ENCODE measurements at regions of chr17 and their contacts with region 1.

Region 1: DNA sequence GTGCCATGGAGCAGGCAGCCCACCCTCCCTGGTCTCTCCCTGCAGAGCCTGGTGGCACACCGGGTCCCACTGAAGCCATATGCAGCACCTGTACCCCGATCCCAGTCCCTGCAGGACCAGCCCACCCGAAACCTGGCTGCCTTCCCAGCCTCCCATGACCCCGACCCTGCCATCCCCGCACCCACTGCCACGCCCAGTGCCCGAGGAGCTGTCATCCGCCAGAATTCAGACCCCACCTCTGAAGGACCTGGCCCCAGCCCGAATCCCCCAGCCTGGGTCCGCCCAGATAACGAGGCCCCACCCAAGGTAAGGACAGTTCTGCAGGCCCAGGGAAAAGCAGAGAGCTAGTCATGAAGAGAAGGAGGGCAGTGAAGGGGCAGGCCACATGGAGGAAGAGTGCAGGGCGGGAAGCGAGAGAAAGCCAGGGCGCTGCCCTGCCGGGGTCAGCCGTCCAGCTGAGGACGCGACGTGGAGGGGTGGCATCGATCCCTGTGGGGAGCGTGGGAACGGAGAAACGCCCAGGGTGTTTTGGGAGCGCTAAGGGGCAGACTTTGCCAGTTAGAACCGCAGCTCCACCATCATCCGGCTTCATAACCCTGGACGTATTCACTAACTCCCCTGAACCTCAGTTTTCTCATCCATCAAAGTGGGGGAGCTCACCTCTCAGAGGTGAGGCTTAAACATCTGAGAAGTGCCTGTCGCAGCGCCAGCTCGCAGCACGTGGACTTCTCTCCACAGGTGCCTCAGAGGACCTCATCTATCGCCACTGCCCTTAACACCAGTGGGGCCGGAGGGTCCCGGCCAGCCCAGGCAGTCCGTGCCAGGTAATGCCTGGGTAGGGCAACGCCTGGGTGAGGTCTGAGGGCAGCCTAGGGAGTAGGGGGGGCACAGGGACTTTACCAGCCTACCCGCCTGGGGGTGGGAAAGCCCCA is 7.7 kb upstream of the C17orf107 start:
- DNase-seq: no peak

Region 2: DNA sequence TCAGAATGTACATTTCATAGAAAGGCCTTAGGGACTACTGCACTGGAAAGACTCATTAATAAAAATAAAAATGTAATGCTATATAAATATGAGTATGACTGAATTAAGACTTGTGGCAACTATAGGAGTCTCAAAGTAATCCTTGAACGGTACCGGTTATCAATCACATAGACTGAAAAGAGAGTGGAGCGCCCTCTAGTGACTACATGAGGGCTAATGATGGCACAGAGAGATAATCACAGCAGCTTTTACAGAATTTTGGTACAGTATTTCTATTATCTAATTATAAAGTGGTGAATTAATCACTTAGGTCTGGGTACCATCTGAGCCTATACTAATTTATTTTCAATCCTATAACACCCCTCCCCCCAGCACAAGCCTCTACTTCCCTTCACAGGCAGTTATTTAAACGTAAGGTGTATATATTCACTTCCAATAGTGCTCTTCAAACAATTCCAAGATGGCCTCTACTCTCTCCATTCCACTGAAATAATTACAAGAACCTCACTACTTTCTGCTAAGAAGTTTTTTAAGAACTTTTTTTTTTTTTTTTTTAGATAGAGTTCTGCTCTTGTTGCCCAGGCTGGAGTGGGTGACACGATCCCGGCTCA is 587.2 kb before region 1 on chr17:
- intact Hi-C with region 1: no loop called
- DNase-seq: no peak

Region 3: DNA sequence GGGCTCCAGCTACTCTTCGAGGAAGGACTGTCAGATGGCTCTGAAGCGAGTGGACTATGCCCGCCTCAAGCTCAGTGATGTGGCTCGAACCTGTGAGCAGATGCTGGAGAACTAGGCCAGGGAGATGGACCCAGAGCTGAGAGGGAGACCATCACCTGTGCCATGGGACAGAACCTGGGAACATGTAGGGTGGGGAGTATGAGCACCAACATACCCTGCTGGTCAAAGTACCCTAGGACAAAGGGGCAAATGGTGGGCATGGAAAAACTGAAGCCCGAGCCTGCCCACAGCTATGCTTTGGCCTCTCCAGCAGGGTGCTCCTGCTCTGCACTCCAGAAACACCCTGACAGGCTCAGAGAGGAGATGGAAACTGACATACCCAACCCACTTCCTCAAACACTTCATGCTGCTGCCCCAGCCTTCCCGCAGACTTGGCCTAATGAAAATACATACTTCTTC is 158.6 kb before region 1 on chr17:
- intact Hi-C with region 1: loop called (anchors 5 kb)
- DNase-seq: no peak

Region 4: GRCh38 chr17:4852567-4853207 is 39.0 kb before region 1 on chr17:
- intact Hi-C with region 1: no loop called
- DNase-seq: no peak

Region 5: DNA sequence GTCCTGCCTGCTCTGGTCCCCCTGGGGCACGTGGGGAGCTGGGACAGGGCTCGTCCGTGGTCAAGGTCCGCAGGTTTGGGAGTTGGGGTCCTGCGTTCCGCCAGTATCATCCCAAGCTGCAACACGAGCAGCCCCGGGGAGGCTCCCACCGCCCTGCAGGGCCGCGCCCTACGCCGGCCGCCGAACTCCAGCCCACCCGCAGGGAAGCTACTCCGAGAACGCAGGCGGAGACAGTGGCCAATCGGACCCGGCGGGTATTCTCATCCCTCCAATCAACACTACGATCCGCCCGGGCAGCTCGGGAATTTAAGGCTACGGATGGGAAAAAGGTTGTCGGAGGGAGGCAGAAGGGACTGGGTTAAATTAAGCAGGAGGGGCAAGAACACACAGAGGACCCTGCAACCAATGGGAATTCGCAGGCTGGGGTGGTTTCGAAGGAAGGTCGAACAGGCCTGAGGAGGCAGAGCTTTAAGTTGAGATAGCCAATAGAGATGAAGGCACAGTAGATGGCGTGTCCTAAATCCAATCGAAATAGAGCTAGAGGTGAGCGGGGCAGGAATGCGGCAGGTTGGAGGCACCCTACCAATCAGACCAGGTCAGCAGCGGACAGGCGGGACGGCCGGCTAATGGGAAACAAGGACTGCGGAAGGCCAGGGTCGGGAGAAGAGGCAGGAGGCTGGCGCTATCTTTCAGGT is 75.3 kb after region 1 on chr17:
- intact Hi-C with region 1: no loop called
- DNase-seq: peak; percentile 99